CD8-positive, alpha-beta T cell (primary cell): ENCODE measurements at regions of chr4 and their contacts with region 1.

Region 1: GRCh38 chr4:37977471-37978247 is 17.5 kb downstream of the PTTG2 start:
- DNase-seq: peak; percentile 48 to 90 (median 76)
- ATAC-seq: peak; percentile 73
- H3K4me3 ChIP-seq: peak overlapping the region; percentile 40 to 48
- H3K4me3 Mint-ChIP-seq: peak overlapping the region; percentile 87
- H3K27ac ChIP-seq: peak overlapping the region; percentile 57 to 66
- H3K27ac Mint-ChIP-seq: peak overlapping the region; percentile 74
- H3K4me1 ChIP-seq: peaks cover 18% of the 10 kb centered on the region
- H3K4me1 Mint-ChIP-seq: peaks cover 28% of the 10 kb centered on the region
- H3K27me3 ChIP-seq: no peaks in the 10 kb centered on the region
- H3K27me3 Mint-ChIP-seq: no peaks in the 10 kb centered on the region
- CTCF ChIP-seq: peak; percentile 65

Region 2: DNA sequence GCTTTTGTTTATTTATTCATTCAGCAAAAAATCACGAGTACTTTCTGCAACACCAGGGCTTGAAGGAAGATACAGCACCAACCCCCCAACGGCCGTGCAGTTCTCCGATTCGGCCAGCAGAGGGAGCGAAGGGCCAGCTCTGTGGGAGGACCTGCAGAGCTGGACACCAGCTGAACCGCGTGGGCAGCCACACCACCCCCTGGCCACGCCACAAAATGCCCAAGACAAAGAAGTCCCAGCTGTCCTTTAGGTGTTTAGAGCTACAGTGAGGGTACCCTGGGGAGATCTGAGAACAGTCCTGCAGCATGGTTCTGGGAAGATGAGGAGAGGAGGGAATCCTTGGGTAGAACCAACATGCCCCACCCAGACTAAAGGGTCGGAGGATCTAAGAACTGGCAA is 374.6 kb before region 1 on chr4:
- CTCF ChIA-PET with region 1: interaction called, 3 read pairs
- POLR2A ChIA-PET with region 1: no interaction called
- intact Hi-C with region 1: loop called in 1 of 2 experiments (anchors 5 kb)
- DNase-seq: peak; percentile 56 to 87 (median 72)
- ATAC-seq: peak; percentile 74
- H3K4me3 ChIP-seq: no peak overlapping the region
- H3K4me3 Mint-ChIP-seq: no peak overlapping the region
- H3K27ac ChIP-seq: no peak overlapping the region
- H3K27ac Mint-ChIP-seq: no peak overlapping the region
- H3K4me1 ChIP-seq: peaks cover 8% of the 10 kb centered on the region
- H3K4me1 Mint-ChIP-seq: peaks cover 5% of the 10 kb centered on the region
- H3K27me3 ChIP-seq: no peaks in the 10 kb centered on the region
- H3K27me3 Mint-ChIP-seq: no peaks in the 10 kb centered on the region
- CTCF ChIP-seq: peak; percentile 98

Region 3: GRCh38 chr4:37802068-37802666 is 175.5 kb before region 1 on chr4:
- CTCF ChIA-PET with region 1: interaction called, 13 read pairs
- POLR2A ChIA-PET with region 1: no interaction called
- intact Hi-C with region 1: loop called (anchors 1 kb)
- DNase-seq: no peak
- ATAC-seq: no peak
- H3K4me3 ChIP-seq: no peak overlapping the region
- H3K4me3 Mint-ChIP-seq: no peak overlapping the region
- H3K27ac ChIP-seq: no peak overlapping the region
- H3K27ac Mint-ChIP-seq: no peak overlapping the region
- H3K4me1 ChIP-seq: no peaks in the 10 kb centered on the region
- H3K4me1 Mint-ChIP-seq: peaks cover 2% of the 10 kb centered on the region
- H3K27me3 ChIP-seq: no peaks in the 10 kb centered on the region
- H3K27me3 Mint-ChIP-seq: no peaks in the 10 kb centered on the region
- CTCF ChIP-seq: no peak

Region 4: DNA sequence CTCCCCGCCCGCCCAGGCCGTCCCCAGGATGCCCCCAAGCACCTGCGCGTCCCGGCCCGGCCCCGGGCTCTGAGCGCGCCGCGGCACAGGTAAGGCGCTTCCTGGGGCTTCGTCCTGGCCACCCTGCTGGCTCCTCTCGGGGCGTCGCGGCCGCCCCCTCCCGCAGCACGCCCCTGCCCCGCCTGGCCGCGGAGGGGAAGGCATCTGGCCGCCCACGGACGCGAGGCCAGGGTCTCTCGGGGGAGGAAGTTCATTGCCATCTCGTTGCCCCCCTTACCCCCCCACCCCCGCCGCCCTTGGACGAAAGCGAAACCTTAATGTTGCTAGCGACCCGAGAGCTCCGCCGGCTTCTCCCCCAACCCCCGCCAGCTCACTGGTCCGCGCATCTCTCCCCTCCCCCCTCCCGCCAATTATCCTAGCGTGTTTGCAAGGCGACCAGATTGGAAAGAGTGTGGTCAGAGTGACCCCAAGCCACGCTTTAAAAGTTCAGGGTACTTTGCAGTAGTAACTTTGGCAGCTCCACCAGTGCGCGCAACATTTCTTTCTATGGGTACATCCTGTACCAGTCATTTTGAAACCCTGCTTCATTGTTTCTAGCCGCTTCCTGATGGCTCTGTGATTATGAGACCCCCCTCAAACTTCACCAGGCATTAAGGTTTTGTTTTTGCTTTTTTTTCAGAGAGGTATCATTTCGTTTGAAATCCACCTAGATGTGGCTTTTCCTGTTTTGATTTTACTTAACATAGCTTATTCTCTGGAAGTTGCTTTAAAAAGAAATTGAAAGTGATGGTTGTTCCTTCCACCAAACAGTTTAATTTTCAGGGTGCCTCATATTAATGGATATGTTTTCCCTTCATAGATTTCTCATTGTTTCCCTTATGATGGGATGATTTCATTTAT is 86.1 kb before region 1 on chr4:
- CTCF ChIA-PET with region 1: interaction called, 11 read pairs
- POLR2A ChIA-PET with region 1: no interaction called
- intact Hi-C with region 1: loop called (anchors 1 kb)
- DNase-seq: peak; percentile 16 to 82 (median 51)
- ATAC-seq: peak; percentile 60
- H3K4me3 ChIP-seq: peak overlapping the region; percentile 60 to 80
- H3K4me3 Mint-ChIP-seq: peak overlapping the region; percentile 97
- H3K27ac ChIP-seq: peak overlapping the region; percentile 56 to 61
- H3K27ac Mint-ChIP-seq: peak overlapping the region; percentile 97
- H3K4me1 ChIP-seq: peaks cover 30% of the 10 kb centered on the region
- H3K4me1 Mint-ChIP-seq: peaks cover 44% of the 10 kb centered on the region
- H3K27me3 ChIP-seq: no peaks in the 10 kb centered on the region
- H3K27me3 Mint-ChIP-seq: no peaks in the 10 kb centered on the region
- CTCF ChIP-seq: no peak

Region 5: GRCh38 chr4:37928426-37929416 is 48.9 kb before region 1 on chr4:
- CTCF ChIA-PET with region 1: no interaction called
- POLR2A ChIA-PET with region 1: no interaction called
- intact Hi-C with region 1: no loop called
- DNase-seq: peak in 2 of 9 experiments; percentile 13 to 25
- ATAC-seq: no peak
- H3K4me3 ChIP-seq: no peak overlapping the region
- H3K4me3 Mint-ChIP-seq: no peak overlapping the region
- H3K27ac ChIP-seq: no peak overlapping the region
- H3K27ac Mint-ChIP-seq: no peak overlapping the region
- H3K4me1 ChIP-seq: peaks cover 14% of the 10 kb centered on the region
- H3K4me1 Mint-ChIP-seq: peaks cover 36% of the 10 kb centered on the region
- H3K27me3 ChIP-seq: no peaks in the 10 kb centered on the region
- H3K27me3 Mint-ChIP-seq: no peaks in the 10 kb centered on the region
- CTCF ChIP-seq: no peak

Region 6: DNA sequence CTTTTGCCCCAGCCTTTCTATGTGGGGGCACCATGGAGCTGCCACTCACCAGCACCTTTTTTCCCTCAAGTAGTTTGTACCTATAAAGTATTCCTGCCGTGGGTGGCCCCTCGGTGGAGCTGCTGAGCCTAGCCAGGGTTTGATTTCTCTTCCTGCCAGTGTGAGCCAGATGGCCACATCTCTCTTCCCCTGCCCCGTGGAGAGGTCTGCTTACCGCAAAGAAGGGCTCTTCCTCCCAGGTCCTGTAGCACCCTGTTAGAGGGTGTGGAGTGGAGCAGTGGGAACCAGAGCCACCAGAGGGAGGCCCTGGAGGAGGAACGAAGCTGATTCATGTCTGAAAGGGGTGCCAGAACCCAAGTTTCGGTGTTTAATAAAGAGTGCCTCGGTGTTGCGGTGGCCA is 77.9 kb after region 1 on chr4:
- CTCF ChIA-PET with region 1: no interaction called
- POLR2A ChIA-PET with region 1: no interaction called
- intact Hi-C with region 1: no loop called
- DNase-seq: no peak
- ATAC-seq: no peak
- H3K4me3 ChIP-seq: no peak overlapping the region
- H3K4me3 Mint-ChIP-seq: no peak overlapping the region
- H3K27ac ChIP-seq: no peak overlapping the region
- H3K27ac Mint-ChIP-seq: no peak overlapping the region
- H3K4me1 ChIP-seq: no peaks in the 10 kb centered on the region
- H3K4me1 Mint-ChIP-seq: no peaks in the 10 kb centered on the region
- H3K27me3 ChIP-seq: no peaks in the 10 kb centered on the region
- H3K27me3 Mint-ChIP-seq: no peaks in the 10 kb centered on the region
- CTCF ChIP-seq: no peak

Region 7: DNA sequence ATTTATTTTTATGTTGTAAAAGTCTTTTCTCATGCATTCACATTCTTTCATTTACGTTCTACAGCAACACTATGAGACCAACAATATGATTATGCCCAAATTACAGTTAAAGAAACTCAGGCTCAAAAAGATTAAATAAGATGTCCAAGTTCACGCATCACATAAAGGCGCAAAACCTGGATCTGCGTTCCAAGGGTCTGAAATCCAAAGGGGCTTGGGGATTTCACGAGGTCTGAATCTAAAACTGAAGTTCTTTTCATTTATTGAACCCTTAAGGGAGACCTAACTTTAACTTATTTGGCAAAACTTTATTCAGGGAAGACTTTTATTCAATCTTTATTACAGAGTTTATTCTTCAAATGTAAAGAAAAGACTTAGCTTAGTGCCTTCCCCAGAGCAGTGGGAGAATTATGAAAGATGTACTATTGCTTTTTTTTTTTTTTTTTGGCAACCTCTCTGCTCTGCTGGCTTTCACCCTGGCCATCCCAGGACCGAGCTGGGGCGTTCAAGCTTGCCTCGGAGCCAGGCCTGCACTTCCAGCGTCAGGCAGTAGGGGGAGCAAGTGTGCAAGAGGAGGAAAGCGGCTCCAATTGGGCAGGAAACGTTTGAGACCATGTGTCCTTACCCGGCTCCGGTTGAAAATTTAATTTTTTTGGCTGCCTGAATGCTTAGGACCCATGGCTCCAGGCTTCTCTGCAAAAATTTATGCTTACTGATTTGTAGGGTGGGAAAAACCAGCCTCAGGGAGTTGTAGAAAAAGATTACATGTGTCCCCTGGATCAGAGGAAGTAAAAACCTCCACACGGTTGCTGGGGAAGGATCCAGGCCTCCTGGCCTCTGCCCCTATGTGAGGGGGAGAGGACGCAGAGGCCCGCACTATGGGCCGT is 342.0 kb after region 1 on chr4:
- CTCF ChIA-PET with region 1: no interaction called
- POLR2A ChIA-PET with region 1: no interaction called
- intact Hi-C with region 1: loop called in 1 of 2 experiments (anchors 10 kb)
- DNase-seq: peak; percentile 83 to 98 (median 90)
- ATAC-seq: peak; percentile 88
- H3K4me3 ChIP-seq: peak overlapping the region; percentile 43 to 51
- H3K4me3 Mint-ChIP-seq: peak overlapping the region; percentile 82
- H3K27ac ChIP-seq: peak overlapping the region; percentile 33 to 78
- H3K27ac Mint-ChIP-seq: peak overlapping the region; percentile 90
- H3K4me1 ChIP-seq: peaks cover 39% of the 10 kb centered on the region
- H3K4me1 Mint-ChIP-seq: peaks cover 62% of the 10 kb centered on the region
- H3K27me3 ChIP-seq: no peaks in the 10 kb centered on the region
- H3K27me3 Mint-ChIP-seq: no peaks in the 10 kb centered on the region
- CTCF ChIP-seq: peak; percentile 96